Activated CD8-positive, alpha-beta memory T cell treated with anti-CD3 and anti-CD28 coated beads, Interleukin-2, amount 10 ng/mL, durations not matched to agents 7 days and 5 days (primary cell): ENCODE measurements at regions of chr16 and their contacts with region 1.

Region 1: GRCh38 chr16:57576429-57576870 is 34.0 kb downstream of the ADGRG5 start:
- DNase-seq: peak; percentile 92
- ATAC-seq: peak; percentile 70
- H3K4me3 Mint-ChIP-seq: no peak overlapping the region
- H3K27ac Mint-ChIP-seq: peak overlapping the region; percentile 91
- H3K4me1 Mint-ChIP-seq: peaks cover 61% of the 10 kb centered on the region
- H3K27me3 Mint-ChIP-seq: no peaks in the 10 kb centered on the region

Region 2: DNA sequence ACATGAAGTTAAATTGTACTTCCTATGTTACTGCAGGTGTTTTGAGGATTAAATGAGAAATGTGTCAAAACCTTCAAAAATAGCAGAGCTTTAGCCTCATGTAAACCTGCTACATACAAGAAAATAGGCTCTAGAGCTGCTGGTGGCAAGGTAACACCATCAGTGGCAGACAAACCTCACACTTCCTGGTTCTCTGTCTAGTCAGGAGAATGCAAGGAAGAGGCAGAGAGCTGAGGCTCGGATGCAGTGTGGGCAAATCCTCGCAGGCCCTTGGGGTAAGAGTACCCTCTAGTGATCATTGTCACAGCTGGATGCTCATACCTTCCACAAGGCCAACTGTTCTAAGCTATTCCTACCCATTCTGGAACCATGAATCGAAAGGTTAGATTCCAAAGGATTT is 143.5 kb before region 1 on chr16:
- CTCF ChIA-PET with region 1: no interaction called
- DNase-seq: no peak
- ATAC-seq: no peak
- H3K4me3 Mint-ChIP-seq: no peak overlapping the region
- H3K27ac Mint-ChIP-seq: no peak overlapping the region
- H3K4me1 Mint-ChIP-seq: no peaks in the 10 kb centered on the region
- H3K27me3 Mint-ChIP-seq: no peaks in the 10 kb centered on the region

Region 3: DNA sequence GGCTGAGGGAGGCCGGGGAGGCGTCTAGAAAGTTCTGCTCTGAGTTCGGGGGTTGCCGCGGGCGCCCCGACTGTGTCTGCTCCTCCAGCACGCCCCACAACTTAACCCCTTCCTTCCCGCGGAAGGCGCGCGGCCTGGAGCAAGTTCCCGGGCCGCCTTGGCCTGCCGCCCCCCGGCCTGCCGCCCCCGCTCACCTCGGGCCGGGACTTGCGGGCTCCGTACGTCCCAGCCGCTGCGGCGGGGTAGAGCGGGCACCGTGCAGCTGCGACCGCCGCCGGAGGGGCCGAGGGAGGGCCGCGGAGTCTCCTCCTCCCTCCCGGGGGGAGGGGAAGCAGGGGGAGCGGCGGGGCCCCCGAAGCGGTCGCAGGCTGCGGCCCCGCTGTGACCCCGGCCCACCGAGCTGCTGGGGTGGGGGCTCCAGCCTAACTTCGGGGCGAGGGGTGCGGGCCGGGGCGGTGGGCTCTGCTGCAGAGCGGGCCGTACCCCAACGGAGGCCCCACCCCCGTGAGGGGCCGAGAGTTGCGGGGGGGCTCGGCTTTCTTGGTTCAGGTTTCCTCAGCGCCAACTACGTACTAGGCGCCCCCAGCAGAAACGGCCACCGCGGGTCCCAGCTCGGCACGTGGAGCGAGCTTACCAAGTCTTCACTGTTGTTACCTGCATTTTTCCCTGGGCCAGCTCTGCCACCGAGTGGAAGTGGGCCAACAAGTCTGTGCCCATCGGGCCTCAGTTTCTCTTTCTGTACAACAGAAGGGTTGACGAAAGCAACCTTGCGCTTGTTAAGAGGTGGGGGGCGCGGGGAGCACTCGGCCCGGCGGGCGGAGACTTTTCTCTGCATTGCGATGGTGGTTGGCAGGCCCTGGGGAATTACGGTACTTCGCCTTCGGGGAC is 39.9 kb before region 1 on chr16 and contains the start of gene CCDC102A:
- CTCF ChIA-PET with region 1: interaction called, 22 read pairs
- DNase-seq: peak; percentile 74
- ATAC-seq: peak; percentile 38
- H3K4me3 Mint-ChIP-seq: peak within 1 kb of the TSS; percentile 84
- H3K27ac Mint-ChIP-seq: peak within 1 kb of the TSS; percentile 90
- H3K4me1 Mint-ChIP-seq: peaks cover 79% of the 10 kb centered on the region
- H3K27me3 Mint-ChIP-seq: no peaks in the 10 kb centered on the region
- total RNA-seq, gene CCDC102A: 19.7 to 20.2 TPM

Region 4: GRCh38 chr16:57591086-57591869 is 14.8 kb after region 1 on chr16:
- CTCF ChIA-PET with region 1: interaction called, 210 read pairs
- DNase-seq: peak; percentile 90
- ATAC-seq: peak; percentile 78
- H3K4me3 Mint-ChIP-seq: peak overlapping the region; percentile 68
- H3K27ac Mint-ChIP-seq: peak overlapping the region; percentile 91
- H3K4me1 Mint-ChIP-seq: peaks cover 67% of the 10 kb centered on the region
- H3K27me3 Mint-ChIP-seq: no peaks in the 10 kb centered on the region

Region 5: GRCh38 chr16:57609541-57610401 is 33.3 kb after region 1 on chr16:
- CTCF ChIA-PET with region 1: interaction called, 65 read pairs
- DNase-seq: peak; percentile 95
- ATAC-seq: peak; percentile 94
- H3K4me3 Mint-ChIP-seq: peak overlapping the region; percentile 67
- H3K27ac Mint-ChIP-seq: peak overlapping the region; percentile 97
- H3K4me1 Mint-ChIP-seq: peaks cover 82% of the 10 kb centered on the region
- H3K27me3 Mint-ChIP-seq: no peaks in the 10 kb centered on the region

Region 6: GRCh38 chr16:57656342-57656955 is 80.0 kb after region 1 on chr16:
- CTCF ChIA-PET with region 1: interaction called, 559 read pairs
- DNase-seq: no peak
- ATAC-seq: no peak
- H3K4me3 Mint-ChIP-seq: no peak overlapping the region
- H3K27ac Mint-ChIP-seq: peak overlapping the region; percentile 44
- H3K4me1 Mint-ChIP-seq: peaks cover 24% of the 10 kb centered on the region
- H3K27me3 Mint-ChIP-seq: no peaks in the 10 kb centered on the region

Region 7: DNA sequence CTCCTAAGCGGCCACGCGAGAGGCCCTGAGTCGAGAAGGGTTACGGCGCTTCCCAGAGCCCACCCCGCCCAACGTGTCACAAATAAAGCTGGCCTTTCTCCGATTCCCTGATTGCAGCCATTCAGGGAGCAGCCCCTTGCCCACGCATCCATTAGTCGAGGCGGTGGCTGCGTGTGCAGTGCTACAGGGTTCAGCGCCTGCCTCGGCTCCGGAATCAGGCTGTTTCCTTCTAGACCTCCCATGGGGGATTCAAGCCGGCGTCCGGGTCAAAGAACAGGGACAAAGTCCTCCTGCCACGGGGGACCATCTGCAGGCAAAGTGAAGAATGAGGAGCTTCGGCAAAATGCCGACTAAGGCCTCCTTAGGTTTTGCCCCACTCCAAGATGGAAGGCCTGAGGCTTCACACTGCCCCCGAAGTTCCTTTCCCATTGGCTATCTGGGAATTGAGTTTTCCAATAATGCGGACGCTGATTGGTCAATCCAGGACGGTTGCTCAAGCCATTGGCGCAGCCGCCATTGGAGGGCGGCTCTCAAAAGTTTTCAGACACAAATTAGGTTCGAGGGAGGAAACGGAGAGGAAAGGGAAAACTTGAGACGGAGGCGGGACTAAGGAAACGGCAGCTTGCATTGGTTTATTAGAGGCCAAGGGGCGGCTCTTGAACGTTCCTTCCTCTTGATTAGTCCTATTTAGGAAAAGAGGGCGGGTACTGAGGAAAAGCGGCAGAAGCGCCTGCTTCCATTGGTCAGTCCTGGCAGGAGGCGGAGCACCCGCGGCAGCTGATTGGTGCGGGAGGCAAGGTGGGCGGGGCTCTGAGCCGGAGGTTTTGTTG is 158.7 kb after region 1 on chr16:
- CTCF ChIA-PET with region 1: interaction called, 37 read pairs
- DNase-seq: peak; percentile 99
- ATAC-seq: peak; percentile 90
- H3K4me3 Mint-ChIP-seq: peak overlapping the region; percentile 92
- H3K27ac Mint-ChIP-seq: peak overlapping the region; percentile 92
- H3K4me1 Mint-ChIP-seq: peaks cover 32% of the 10 kb centered on the region
- H3K27me3 Mint-ChIP-seq: no peaks in the 10 kb centered on the region